Left cardiac atrium (tissue), 4 donors: ENCODE measurements at regions of chr7 and their contacts with region 1.

Region 1: DNA sequence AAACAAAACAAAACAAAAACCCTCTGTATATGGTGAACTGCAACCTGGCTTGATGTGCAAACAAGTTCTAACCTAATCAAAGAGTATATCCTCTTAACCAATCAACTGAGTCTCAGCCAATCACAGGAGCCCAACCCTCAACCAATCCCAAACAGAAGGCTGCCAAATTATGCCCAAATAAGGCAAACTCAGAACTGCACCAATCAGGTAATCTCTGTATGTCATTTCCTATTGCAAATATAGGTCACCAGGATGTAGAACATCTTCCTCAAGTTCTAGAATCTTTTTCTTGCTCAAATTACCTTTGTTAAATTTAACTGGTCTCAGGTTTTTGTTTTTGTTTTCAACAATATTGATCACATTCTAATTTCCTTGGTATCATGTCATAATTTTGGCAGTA is 5.2 kb downstream of the FAM133B start:
- DNase-seq: no peak
- ATAC-seq: no peak

Region 2: DNA sequence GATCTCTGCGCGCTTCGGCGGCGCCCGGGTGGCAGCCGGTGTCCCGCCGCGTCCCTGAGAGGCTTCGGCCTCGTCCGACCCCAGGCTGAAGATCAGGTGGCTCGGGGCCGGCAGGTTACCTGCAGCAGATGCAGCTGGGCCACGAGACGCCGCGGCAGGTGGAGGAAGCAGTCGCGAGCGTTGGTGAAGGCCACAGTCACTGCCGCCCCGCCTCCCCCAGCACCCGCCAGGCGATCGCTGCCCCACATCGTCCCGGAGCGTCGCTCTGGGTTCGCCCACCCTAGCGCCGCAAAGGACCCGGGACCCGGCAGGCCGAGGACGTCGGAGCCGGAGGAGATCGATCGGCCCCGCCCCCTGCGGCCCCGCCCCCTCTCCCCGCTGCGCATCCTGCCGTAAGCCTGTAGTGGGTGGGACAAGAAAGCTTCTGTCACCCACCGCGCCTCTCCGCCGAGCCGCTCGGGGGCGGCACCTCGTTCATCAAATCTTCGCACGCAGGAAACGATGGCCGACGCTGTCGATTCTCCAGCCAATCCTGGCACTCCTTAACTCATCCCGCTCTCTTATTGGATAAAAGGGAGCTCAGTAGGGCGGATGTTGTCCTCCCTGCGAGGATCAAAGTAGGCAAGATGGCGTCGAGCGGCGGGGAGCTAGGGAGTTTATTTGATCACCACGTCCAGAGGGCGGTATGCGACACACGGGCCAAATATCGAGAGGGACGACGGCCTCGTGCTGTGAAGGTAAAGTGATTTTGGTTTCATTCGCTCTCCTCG is 56.6 kb before region 1 on chr7 and contains the starts of genes PEX1 and RBM48:
- intact Hi-C with region 1: loop called in 1 of 2 experiments (anchors 10 kb)
- DNase-seq: peak; percentile 96
- ATAC-seq: peak; percentile 99
- total RNA-seq, gene PEX1: 11.6 to 15.2 TPM
- total RNA-seq, gene RBM48: 9.4 to 11.8 TPM